ENCODE measurements at regions of chr15 and their contacts with region 1.

Region 1: DNA sequence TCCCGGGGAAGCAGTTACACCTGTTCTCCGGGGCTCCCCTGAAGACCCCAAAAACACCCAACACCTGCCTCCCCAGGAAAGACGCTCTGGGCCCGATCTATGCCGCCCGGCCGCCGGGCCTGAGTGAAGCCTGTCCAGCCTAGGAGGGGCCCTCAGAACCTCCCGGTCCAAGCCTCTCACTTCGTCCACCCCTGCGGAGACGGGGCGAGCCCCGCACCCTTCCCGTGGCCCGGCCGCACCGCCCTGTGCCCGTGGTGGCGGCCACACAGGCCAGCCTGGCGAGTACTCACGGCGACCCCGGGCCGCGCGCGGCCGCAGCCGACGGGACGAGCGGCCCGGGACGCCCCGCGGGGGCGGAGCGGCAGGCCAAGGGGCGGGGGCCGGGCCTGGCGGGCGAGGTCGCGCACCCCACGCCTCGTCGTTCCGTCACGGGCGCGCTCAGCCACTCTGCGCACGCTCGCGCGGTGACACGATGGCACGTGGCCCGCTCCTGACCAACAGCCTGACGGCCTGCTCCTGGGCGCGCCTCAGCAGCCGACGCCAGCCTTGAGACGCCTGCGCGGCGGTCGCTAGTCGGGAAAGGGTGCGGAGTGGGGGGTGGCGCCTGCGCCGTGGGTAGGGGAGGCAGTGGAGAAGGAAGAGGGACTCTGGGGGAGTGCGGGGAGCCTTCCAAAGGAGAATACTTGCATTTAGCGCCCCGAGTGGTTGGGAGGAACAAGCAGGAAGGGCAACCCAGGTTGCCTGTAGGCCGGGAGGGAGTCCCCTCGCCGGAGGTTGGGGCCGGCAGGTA is at the start of gene PARP6:
- DNase-seq: peak; percentile 96
- H3K4me3 Mint-ChIP-seq: peak within 1 kb of the TSS; percentile 80
- H3K27ac Mint-ChIP-seq: peak within 1 kb of the TSS; percentile 86
- H3K4me1 Mint-ChIP-seq: peaks cover 20% of the 10 kb centered on the region
- H3K27me3 Mint-ChIP-seq: no peaks in the 10 kb centered on the region
- CTCF ChIP-seq: peak; percentile 53
- total RNA-seq, gene PARP6: 117 TPM in 2 replicates

Region 2: GRCh38 chr15:71939981-71940588 is 332.3 kb before region 1 on chr15:
- CTCF ChIA-PET with region 1: no interaction called
- POLR2A ChIA-PET with region 1: no interaction called
- intact Hi-C with region 1: no loop called
- DNase-seq: no peak
- H3K4me3 Mint-ChIP-seq: no peak overlapping the region
- H3K27ac Mint-ChIP-seq: no peak overlapping the region
- H3K4me1 Mint-ChIP-seq: no peaks in the 10 kb centered on the region
- H3K27me3 Mint-ChIP-seq: no peaks in the 10 kb centered on the region
- CTCF ChIP-seq: no peak

Region 3: GRCh38 chr15:72184165-72184889 is 88.1 kb before region 1 on chr15:
- CTCF ChIA-PET with region 1: no interaction called
- POLR2A ChIA-PET with region 1: no interaction called
- intact Hi-C with region 1: no loop called
- DNase-seq: peak; percentile 65
- H3K4me3 Mint-ChIP-seq: peak overlapping the region; percentile 38
- H3K27ac Mint-ChIP-seq: no peak overlapping the region
- H3K4me1 Mint-ChIP-seq: peaks cover 26% of the 10 kb centered on the region
- H3K27me3 Mint-ChIP-seq: no peaks in the 10 kb centered on the region
- CTCF ChIP-seq: no peak

Region 4: DNA sequence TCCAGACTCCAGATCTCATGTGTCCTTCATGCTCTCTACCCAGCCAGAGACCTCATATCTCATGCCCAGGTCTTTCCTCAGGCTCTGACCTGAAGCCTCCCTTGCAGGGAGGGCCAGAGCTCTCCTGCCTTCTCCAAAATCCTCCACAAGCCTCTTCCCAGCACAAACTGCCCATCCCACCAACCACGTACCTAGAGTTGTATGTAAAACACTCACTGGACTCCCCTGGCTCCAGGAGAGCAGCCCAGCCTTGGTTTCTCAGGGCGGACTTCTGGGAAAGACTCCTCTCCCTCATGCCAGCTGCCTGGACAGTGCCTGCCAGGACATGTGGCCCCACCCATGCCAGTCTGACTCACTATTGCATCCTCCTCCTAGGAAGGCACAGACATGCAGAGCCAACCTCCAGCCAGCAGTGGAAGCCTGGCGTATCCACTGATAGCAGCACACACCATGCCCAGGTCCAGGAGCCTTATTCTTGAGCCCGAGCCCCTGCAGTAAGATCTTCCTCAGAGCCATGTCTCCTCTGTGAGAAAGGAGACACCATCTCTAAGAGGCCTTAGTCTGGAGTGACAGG is 50.1 kb before region 1 on chr15:
- CTCF ChIA-PET with region 1: interaction called, 3 read pairs
- POLR2A ChIA-PET with region 1: interaction called, 18 read pairs
- intact Hi-C with region 1: loop called (anchors 1 kb)
- DNase-seq: peak; percentile 98
- H3K4me3 Mint-ChIP-seq: peak overlapping the region; percentile 67
- H3K27ac Mint-ChIP-seq: peak overlapping the region; percentile 71
- H3K4me1 Mint-ChIP-seq: peaks cover 58% of the 10 kb centered on the region
- H3K27me3 Mint-ChIP-seq: no peaks in the 10 kb centered on the region
- CTCF ChIP-seq: no peak

Region 5: GRCh38 chr15:72237286-72238224 is 34.9 kb before region 1 on chr15:
- CTCF ChIA-PET with region 1: interaction called, 4 read pairs
- POLR2A ChIA-PET with region 1: interaction called, 27 read pairs
- intact Hi-C with region 1: no loop called
- DNase-seq: peak; percentile 99
- H3K4me3 Mint-ChIP-seq: peak overlapping the region; percentile 61
- H3K27ac Mint-ChIP-seq: peak overlapping the region; percentile 89
- H3K4me1 Mint-ChIP-seq: peaks cover 18% of the 10 kb centered on the region
- H3K27me3 Mint-ChIP-seq: no peaks in the 10 kb centered on the region
- CTCF ChIP-seq: no peak

Region 6: DNA sequence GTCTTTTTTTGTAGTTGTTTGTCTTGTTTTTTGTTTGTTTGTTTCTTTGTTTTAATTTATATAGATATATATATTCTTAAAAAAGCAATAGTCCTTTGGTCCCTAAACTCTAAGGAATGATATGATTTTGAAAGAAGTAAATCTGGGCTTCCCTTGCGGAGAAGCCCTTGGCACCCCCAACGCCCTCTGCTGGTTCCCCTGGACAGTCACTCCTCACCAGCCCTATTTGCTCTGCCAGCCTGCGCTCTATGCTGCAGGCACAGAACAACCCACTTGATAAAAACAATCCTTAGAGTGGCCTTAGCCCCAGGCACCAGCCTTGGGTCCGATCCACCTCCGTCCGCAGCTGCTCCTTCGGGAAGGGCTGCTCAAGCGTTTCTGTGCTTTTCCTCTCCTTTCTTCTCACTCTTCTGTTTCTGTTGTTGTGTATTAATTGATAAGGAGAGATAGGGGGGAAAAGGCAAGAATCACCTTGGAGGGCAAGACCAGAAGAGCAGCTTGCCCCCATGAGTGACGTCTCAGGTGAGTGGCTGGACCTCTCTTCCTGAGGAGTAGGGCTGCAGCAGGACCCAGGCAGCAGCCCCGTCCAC is 13.6 kb after region 1 on chr15:
- CTCF ChIA-PET with region 1: interaction called, 24 read pairs
- POLR2A ChIA-PET with region 1: interaction called, 4 read pairs
- intact Hi-C with region 1: no loop called
- DNase-seq: peak; percentile 43
- H3K4me3 Mint-ChIP-seq: no peak overlapping the region
- H3K27ac Mint-ChIP-seq: no peak overlapping the region
- H3K4me1 Mint-ChIP-seq: no peaks in the 10 kb centered on the region
- H3K27me3 Mint-ChIP-seq: no peaks in the 10 kb centered on the region
- CTCF ChIP-seq: peak; percentile 56

Region 7: DNA sequence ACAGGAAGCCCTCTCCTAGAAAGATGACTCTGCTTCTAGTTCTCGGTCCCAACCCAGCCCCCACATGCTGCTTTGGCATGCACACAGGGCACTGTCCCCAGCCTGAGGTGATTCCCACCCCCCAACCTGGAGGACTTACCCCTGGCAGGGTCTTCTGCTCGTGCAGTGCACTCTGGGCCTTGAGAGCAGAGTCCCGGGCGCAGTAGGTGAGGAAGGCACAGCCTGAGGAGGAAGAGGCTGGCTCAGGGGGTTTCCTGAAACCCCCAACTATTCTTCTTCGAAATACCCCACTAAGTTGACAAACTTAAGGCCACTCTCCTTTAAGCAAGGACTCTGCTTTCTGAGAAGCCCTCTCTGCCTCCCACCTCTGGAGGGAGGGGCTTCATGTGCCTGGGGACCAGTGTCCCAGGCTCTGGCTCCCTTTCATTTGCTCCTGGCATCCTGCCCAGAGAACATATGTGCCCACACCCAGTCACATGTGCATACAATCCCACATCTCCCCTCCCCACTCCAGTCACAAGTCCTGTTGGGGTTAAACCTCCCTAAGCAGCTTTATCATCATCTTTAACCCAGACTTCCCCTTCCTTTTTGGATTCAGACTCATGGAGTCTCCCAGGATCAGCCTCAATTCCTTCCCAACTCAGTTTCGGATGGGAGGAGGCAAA is 43.4 kb after region 1 on chr15:
- CTCF ChIA-PET with region 1: no interaction called
- POLR2A ChIA-PET with region 1: no interaction called
- intact Hi-C with region 1: no loop called
- DNase-seq: peak; percentile 17
- H3K4me3 Mint-ChIP-seq: no peak overlapping the region
- H3K27ac Mint-ChIP-seq: no peak overlapping the region
- H3K4me1 Mint-ChIP-seq: peaks cover 16% of the 10 kb centered on the region
- H3K27me3 Mint-ChIP-seq: peaks cover 23% of the 10 kb centered on the region
- CTCF ChIP-seq: no peak

Region 8: GRCh38 chr15:72331021-72331420 is 58.6 kb after region 1 on chr15:
- CTCF ChIA-PET with region 1: no interaction called
- POLR2A ChIA-PET with region 1: no interaction called
- intact Hi-C with region 1: no loop called
- DNase-seq: no peak
- H3K4me3 Mint-ChIP-seq: no peak overlapping the region
- H3K27ac Mint-ChIP-seq: no peak overlapping the region
- H3K4me1 Mint-ChIP-seq: no peaks in the 10 kb centered on the region
- H3K27me3 Mint-ChIP-seq: no peaks in the 10 kb centered on the region
- CTCF ChIP-seq: no peak

Measured in MCF 10A (cell line).